CD4-positive, alpha-beta T cell (primary cell): ENCODE measurements at regions of chr6 and their contacts with region 1.

Region 1: DNA sequence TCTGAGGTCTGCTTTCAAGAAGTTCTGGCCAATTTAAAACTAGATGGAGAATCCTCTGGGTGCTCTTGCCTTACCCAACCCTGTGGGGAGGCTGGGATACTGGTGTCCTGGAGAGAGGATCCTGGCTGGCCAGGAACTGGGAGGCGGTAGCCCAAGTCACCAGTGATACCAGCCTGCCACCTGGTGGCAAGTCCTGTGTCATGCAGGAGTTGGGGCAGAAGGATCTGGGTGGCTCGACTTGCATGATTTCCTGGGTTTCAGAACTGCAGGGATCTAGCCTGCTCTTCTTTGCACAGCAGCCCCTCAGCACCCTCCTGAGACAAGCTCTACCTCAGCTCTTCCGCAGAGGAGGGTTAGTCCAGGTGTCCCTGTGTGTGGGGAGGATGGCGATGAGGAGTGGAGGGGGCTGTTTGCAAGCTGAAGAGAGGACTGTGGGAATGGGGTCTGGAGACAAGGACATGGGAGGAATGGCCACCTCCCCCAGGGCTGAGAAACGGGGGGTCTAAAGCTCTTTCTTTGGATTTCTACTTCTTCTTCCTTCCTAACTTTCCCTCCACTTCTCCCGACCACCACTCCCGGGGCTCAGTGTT is 4.2 kb downstream of the KCNK17 start:
- DNase-seq: peak; percentile 25 to 70 (median 46)
- ATAC-seq: peak; percentile 61
- H3K4me3 ChIP-seq: no peak overlapping the region
- H3K4me3 Mint-ChIP-seq: no peak overlapping the region
- H3K27ac ChIP-seq: no peak overlapping the region
- H3K27ac Mint-ChIP-seq: no peak overlapping the region
- H3K4me1 ChIP-seq: peaks cover 10% of the 10 kb centered on the region
- H3K4me1 Mint-ChIP-seq: no peaks in the 10 kb centered on the region
- H3K27me3 ChIP-seq: peaks cover 33 to 35% of the 10 kb centered on the region in 2 experiments
- H3K27me3 Mint-ChIP-seq: peaks cover 36% of the 10 kb centered on the region
- CTCF ChIP-seq: peak; percentile 66

Region 2: GRCh38 chr6:39166189-39166911 is 143.7 kb before region 1 on chr6:
- CTCF ChIA-PET with region 1: interaction called, 5 read pairs
- POLR2A ChIA-PET with region 1: no interaction called
- intact Hi-C with region 1: loop called in 1 of 2 experiments (anchors 1 kb)
- DNase-seq: peak; percentile 66 to 87 (median 78)
- ATAC-seq: peak; percentile 78
- H3K4me3 ChIP-seq: no peak overlapping the region
- H3K4me3 Mint-ChIP-seq: no peak overlapping the region
- H3K27ac ChIP-seq: no peak overlapping the region
- H3K27ac Mint-ChIP-seq: no peak overlapping the region
- H3K4me1 ChIP-seq: peaks cover 7% of the 10 kb centered on the region
- H3K4me1 Mint-ChIP-seq: no peaks in the 10 kb centered on the region
- H3K27me3 ChIP-seq: no peaks in the 10 kb centered on the region
- H3K27me3 Mint-ChIP-seq: no peaks in the 10 kb centered on the region
- CTCF ChIP-seq: peak; percentile 86